Heart right ventricle (tissue), 16 donors: ENCODE measurements at regions of chr2 and their contacts with region 1.

Region 1: DNA sequence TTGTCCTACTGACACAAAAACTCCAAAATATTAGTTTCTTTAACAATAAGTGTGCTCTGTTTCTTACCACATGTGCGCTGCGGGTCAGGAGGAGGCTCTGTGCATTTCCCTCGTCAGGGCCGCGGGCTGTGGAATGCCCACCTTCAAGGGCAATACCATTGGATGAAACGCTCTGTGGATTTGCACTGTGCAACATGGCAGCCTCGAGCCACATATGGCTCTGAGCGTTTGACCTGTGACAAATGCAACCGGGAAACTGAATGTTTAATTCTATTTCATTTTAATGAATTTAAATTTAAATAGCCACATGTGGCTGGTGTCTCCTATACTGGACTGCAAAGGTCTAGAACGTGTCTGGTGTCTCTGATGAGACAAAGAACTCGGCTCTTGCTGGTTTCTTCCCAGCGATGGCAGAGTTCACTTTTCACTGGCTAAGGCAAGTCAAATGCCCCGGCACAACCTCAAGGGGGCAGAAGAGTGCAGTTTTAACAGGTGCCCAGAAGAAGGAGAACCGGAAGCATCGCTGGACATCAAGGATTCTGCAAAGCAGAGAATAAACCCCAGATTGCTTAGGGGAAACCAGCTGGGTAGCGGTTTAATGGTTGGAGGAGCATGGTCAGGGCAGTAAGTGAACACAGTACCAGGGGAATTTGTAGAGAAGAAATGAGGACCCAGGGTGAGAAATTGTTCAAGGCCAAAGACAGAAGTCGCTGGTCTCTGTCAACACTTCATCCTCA is 37.0 kb upstream of the TMEM18 start:
- DNase-seq: peak in 1 of 2 donors; percentile 33
- ATAC-seq: peak in 7 of 8 donors; percentile 34 to 67 (median 62)
- H3K4me3 ChIP-seq: no peak overlapping the region
- H3K27ac ChIP-seq: no peak overlapping the region
- H3K4me1 ChIP-seq: no peaks in the 10 kb centered on the region
- H3K27me3 ChIP-seq: peaks cover 0 to 77% (median 42%) of the 10 kb centered on the region in 7 donors
- CTCF ChIP-seq: peak; percentile 39 to 70 (median 69)

Region 2: GRCh38 chr2:524442-524841 is 189.7 kb before region 1 on chr2:
- intact Hi-C with region 1: no loop called
- DNase-seq: no peak
- ATAC-seq: no peak
- H3K4me3 ChIP-seq: no peak overlapping the region
- H3K27ac ChIP-seq: no peak overlapping the region
- H3K4me1 ChIP-seq: no peaks in the 10 kb centered on the region
- H3K27me3 ChIP-seq: peaks cover 0 to 21% (median 11%) of the 10 kb centered on the region in 7 donors
- CTCF ChIP-seq: no peak

Region 3: GRCh38 chr2:677056-677965 is 36.9 kb before region 1 on chr2 and contains the start of gene TMEM18:
- intact Hi-C with region 1: no loop called
- DNase-seq: peak in 1 of 2 donors; percentile 97
- ATAC-seq: peak; percentile 92 to 98 (median 94)
- H3K4me3 ChIP-seq: peak within 1 kb of the TSS; percentile 64 to 93 (median 80)
- H3K27ac ChIP-seq: peak within 1 kb of the TSS; percentile 94 to 100 (median 98)
- H3K4me1 ChIP-seq: peaks cover 0 to 32% (median 10%) of the 10 kb centered on the region in 9 donors
- H3K27me3 ChIP-seq: no peaks in the 10 kb centered on the region
- CTCF ChIP-seq: peak in 8 of 9 donors; percentile 10 to 53 (median 38)
- total RNA-seq, gene TMEM18: 10.1 to 13.4 (median 12.2) TPM

Region 4: DNA sequence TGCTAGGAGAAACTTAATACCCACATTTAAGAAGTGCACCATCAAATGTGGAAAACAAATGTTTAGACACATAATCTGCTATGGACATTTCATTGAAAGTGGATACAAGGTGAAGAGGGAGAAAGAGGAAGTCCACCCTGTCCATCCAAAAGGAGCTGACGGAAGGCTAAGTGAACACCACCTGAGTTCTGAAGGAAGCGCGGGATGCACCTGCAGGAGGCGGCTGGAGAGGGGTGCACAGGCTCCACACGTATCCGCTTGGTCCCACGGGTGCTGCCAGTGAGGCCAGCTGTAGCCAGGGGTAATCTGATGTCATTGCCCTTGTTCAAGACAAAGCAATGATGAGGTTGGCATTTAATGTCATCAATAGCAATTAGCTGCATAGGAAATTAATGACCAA is 39.0 kb after region 1 on chr2:
- intact Hi-C with region 1: no loop called
- DNase-seq: no peak
- ATAC-seq: no peak
- H3K4me3 ChIP-seq: no peak overlapping the region
- H3K27ac ChIP-seq: no peak overlapping the region
- H3K4me1 ChIP-seq: no peaks in the 10 kb centered on the region
- H3K27me3 ChIP-seq: peaks cover 0 to 44% (median 7%) of the 10 kb centered on the region in 7 donors
- CTCF ChIP-seq: no peak

Region 5: GRCh38 chr2:789529-789928 is 75.4 kb after region 1 on chr2:
- intact Hi-C with region 1: no loop called
- DNase-seq: no peak
- ATAC-seq: no peak
- H3K4me3 ChIP-seq: no peak overlapping the region
- H3K27ac ChIP-seq: no peak overlapping the region
- H3K4me1 ChIP-seq: no peaks in the 10 kb centered on the region
- H3K27me3 ChIP-seq: no peaks in the 10 kb centered on the region
- CTCF ChIP-seq: no peak

Region 6: DNA sequence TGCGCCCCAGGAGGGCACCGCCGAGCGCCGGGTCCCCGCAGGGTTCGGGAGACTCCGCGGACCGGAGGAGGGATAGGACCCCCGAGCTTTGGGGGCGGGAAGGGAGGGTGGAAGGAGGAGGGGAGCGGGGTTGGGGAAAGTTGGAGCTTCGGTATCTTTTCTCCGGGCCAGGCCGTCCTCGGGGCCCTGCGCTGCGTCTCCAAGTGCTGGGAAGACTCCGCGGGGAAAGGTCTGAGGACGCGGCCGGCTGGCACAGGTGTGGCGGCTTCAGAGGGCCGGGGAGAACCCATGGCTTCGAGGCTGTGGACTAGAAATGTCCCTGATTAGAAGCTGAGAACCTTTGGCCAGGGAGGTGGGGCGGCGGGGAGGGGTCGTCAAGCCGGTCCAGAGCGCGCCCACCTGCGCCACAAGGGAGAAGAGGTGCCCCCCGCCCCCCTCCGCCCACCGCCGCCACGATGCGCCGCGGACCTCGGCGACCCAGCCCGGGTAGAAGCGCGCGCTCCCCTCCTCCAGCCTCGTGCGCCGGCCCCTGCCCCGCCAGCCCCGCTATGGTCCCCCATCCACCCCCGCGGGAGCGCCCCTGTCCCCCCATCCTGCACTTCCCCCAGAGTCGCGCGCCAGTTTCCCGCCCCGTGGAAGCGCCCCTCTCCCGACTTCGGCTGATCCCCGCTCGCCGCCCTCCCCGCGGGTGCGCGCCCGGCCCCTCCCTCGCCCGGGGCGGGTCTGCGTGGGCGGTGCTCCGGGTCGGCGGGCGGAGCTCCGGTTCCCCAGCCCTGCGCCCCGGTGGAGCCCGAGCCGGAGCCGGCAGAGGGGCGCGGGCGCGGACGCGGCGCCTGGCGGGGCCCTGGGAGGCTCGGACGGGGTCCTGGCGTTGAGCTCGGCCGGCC is 236.2 kb after region 1 on chr2 and contains the start of gene SNTG2:
- intact Hi-C with region 1: loop called in 1 of 10 experiments (anchors 10 kb)
- DNase-seq: peak; percentile 20 to 43
- ATAC-seq: peak; percentile 63 to 91 (median 84)
- H3K4me3 ChIP-seq: peak within 1 kb of the TSS; percentile 32 to 66 (median 56)
- H3K27ac ChIP-seq: peak within 1 kb of the TSS in 2 of 10 donors; percentile 12 to 28
- H3K4me1 ChIP-seq: peaks cover 0 to 20% (median 12%) of the 10 kb centered on the region in 9 donors
- H3K27me3 ChIP-seq: peaks cover 7 to 84% (median 72%) of the 10 kb centered on the region in 7 donors
- CTCF ChIP-seq: no peak
- total RNA-seq, gene SNTG2: 0.49 to 2.8 (median 1.2) TPM in 9 of 10 donors, not detected in the other

Region 7: GRCh38 chr2:1826226-1826905 is 1112.2 kb after region 1 on chr2:
- intact Hi-C with region 1: loop called in 1 of 10 experiments (anchors 5 kb)
- DNase-seq: no peak
- ATAC-seq: peak in 2 of 8 donors; percentile 31 to 32
- H3K4me3 ChIP-seq: no peak overlapping the region
- H3K27ac ChIP-seq: peak overlapping the region in 1 of 10 donors; percentile 28
- H3K4me1 ChIP-seq: peaks cover 0 to 7% (median 0%) of the 10 kb centered on the region in 9 donors
- H3K27me3 ChIP-seq: peaks cover 0 to 35% (median 9%) of the 10 kb centered on the region in 7 donors
- CTCF ChIP-seq: no peak